ENCODE measurements at regions of chr5 and their contacts with region 1.

Region 1: GRCh38 chr5:135376961-135377624 is 21.9 kb downstream of the MACROH2A1 start:
- DNase-seq: peak; percentile 68
- H3K4me3 Mint-ChIP-seq: peak overlapping the region; percentile 42
- H3K27ac Mint-ChIP-seq: peak overlapping the region; percentile 73
- H3K4me1 Mint-ChIP-seq: peaks cover 79% of the 10 kb centered on the region
- H3K27me3 Mint-ChIP-seq: no peaks in the 10 kb centered on the region

Region 2: DNA sequence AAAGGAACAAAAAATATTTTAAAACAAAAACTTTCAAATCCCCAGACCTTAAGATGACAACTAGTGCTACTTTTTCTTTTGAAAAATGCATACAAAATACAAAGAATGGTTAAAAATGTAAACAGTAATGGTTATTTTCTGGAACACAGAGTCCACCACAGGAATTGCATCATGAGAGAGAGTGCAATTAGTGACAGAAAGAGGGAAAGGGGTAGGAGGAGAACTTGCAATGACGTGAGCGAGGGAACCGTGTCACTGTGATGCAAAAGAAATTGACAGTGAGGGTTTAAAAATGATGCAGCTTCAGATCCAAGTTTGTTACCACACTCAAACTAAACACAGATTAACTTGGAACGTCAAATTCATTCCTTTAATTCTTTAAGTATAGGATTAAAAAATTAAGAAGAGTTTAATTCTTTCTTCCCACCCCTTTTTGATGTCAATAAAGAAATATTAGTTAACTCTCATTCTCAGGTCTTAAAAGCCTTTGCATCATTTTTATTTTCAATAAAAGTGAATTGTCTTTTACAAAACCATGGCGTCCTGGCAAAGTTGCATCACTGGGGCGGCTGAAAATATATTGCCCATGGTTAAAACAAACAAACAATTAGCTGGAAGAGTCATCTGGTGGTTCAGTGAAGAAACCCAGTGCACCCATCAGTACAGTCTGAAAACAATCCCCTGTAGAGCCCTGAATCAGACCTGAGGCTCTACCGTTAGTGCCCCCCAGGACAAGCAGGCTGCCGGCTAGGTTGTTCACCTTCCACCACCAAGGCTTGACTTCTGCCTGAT is 17.5 kb before region 1 on chr5:
- intact Hi-C with region 1: loop called (anchors 2 kb)
- DNase-seq: no peak
- H3K4me3 Mint-ChIP-seq: no peak overlapping the region
- H3K27ac Mint-ChIP-seq: no peak overlapping the region
- H3K4me1 Mint-ChIP-seq: peaks cover 32% of the 10 kb centered on the region
- H3K27me3 Mint-ChIP-seq: no peaks in the 10 kb centered on the region

Region 3: GRCh38 chr5:135398853-135399523 is 21.9 kb after region 1 on chr5 and contains the start of gene MACROH2A1:
- intact Hi-C with region 1: loop called (anchors 1 kb)
- DNase-seq: peak; percentile 96
- H3K4me3 Mint-ChIP-seq: peak within 1 kb of the TSS; percentile 90
- H3K27ac Mint-ChIP-seq: peak within 1 kb of the TSS; percentile 91
- H3K4me1 Mint-ChIP-seq: peaks cover 45% of the 10 kb centered on the region
- H3K27me3 Mint-ChIP-seq: no peaks in the 10 kb centered on the region
- total RNA-seq, gene MACROH2A1: 282 and 289 TPM in 2 replicates

Region 4: DNA sequence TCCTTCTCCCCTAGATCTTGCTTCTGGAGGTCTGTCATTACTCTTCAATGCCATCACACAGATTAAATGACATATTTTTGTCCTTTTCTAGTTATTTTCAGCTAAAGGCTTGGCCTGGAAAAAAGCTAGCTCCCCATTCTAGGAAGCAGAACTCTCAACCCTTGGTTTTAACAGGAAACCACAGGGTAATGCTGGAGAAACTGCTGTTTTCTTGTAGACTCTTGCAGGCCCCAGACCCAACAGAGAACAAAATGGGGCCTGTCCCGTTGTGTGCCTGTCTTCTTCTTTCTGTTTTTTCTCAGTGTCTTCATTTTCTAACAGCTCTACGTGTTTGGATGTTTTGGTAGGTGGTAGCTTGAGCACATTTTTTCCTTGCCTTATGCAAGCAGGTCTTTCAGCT is 48.5 kb after region 1 on chr5:
- intact Hi-C with region 1: loop called (anchors 2 kb)
- DNase-seq: peak; percentile 60
- H3K4me3 Mint-ChIP-seq: peak overlapping the region; percentile 43
- H3K27ac Mint-ChIP-seq: peak overlapping the region; percentile 76
- H3K4me1 Mint-ChIP-seq: peaks cover 20% of the 10 kb centered on the region
- H3K27me3 Mint-ChIP-seq: peaks cover 15% of the 10 kb centered on the region

Region 5: DNA sequence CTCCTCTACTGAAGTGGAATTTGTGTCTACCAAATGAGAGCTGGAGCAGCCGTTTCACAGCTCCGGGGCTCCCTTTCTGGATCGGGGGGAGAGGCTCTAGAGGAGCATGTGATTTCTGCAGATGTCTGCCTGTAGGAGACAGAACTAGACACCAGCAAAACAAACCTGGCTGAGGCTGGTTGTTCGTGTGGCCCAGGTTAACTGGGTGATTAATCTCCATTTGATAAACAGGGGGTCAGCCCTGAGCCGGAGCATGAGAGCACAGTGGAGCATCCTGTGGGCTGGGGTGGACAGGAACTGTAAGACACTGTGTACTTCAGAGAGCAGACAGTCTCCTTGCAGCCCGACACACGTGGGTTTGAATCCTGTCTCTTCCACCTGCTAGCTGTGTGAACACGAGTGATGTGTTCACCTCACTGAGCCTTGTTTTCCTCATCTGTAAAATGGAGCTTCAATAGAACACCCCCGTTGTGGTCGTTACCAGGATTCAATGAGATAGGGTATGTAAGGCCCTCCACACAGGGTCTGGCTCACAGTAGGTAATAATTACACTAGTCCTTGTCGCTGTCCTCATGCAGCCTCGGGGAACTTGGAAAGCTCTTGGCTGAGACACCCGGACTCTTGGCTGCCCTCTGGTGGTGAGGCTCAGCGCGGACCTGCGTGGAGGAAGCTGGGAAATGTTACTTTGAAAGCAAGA is 188.8 kb after region 1 on chr5:
- intact Hi-C with region 1: no loop called
- DNase-seq: peak; percentile 91
- H3K4me3 Mint-ChIP-seq: no peak overlapping the region
- H3K27ac Mint-ChIP-seq: no peak overlapping the region
- H3K4me1 Mint-ChIP-seq: peaks cover 5% of the 10 kb centered on the region
- H3K27me3 Mint-ChIP-seq: peaks cover 10% of the 10 kb centered on the region